Gastrocnemius medialis (tissue), 4 donors: ENCODE measurements at regions of chr18 and their contacts with region 1.

Region 1: DNA sequence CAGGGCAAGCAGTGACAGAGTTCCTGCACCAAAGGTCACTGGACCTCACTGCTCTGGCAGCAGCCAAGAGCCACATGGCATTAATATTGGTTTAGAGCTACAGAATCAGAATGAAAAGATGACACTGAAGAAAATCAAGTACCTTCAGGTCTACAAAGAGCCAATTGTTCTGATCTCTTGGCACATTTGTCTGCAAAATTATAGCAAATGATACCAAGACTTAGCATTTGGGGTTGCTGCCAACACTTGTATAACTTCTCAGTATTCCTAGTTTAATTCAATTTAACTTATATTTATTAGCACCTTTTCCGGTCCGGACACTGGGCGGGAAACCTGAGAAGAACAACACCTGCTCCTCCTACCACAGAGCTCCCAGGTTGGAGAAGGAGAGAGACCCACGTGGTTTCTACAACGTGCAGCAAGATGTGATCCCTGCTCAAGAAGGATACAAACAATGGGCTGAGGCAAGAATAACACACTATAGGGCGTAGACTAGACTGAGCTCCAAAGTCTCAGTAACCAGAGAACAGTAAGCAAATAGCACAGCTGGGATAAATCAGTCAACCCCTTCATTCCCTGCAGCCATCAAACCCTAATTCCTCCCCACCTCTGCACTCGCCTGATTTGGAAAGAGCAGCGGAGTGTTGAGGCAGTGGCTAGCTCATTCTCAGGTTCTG is 2.4 kb downstream of the LRRC30 start:
- DNase-seq: peak; percentile 78 to 80
- ATAC-seq: peak; percentile 55 to 59
- H3K4me3 ChIP-seq: peak overlapping the region; percentile 52 to 61 (median 54)
- H3K27ac ChIP-seq: peak overlapping the region; percentile 91 to 94 (median 92)
- H3K4me1 ChIP-seq: peaks cover 51 to 53% of the 10 kb centered on the region in 2 donors
- H3K27me3 ChIP-seq: no peaks in the 10 kb centered on the region
- CTCF ChIP-seq: no peak
- POLR2A ChIP-seq: peak in 1 of 2 donors; percentile 28

Region 2: DNA sequence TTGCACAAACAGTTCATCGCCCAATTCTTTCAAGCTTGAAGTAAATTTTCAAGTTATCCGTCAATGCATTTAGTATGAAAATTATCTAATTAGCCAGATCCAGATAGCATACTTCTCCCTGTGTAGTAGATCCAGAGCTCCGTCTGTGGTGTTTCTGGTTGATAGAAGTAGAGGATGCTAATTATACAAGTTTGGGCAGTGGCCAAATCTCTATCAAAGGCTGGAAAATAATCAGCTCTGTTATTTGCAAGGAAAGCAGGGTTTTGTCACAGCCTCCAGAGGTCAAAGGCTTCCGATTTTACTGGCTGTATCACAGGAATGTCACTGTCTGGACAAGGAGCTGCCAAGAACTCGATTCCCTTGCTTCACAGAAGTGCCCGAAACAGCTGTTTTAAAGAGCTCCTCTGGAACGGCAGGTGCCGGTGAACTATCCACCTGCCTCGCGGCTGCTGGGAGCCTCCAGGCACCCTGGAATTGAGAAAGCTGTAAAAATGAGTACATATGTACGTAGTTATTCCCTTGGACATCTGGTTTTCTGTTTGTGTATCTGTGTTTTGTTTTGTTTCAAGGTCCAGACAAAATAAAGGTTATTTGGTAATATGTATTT is 26.3 kb after region 1 on chr18:
- in situ Hi-C with region 1: no loop called
- intact Hi-C with region 1: loop called (anchors 2 kb)
- DNase-seq: no peak
- ATAC-seq: peak in 1 of 2 donors; percentile 20
- H3K4me3 ChIP-seq: peak overlapping the region; percentile 4 to 23 (median 13)
- H3K27ac ChIP-seq: peak overlapping the region; percentile 1 to 58 (median 28)
- H3K4me1 ChIP-seq: peaks cover 32 to 37% of the 10 kb centered on the region in 2 donors
- H3K27me3 ChIP-seq: no peaks in the 10 kb centered on the region
- CTCF ChIP-seq: no peak
- POLR2A ChIP-seq: no peak

Region 3: DNA sequence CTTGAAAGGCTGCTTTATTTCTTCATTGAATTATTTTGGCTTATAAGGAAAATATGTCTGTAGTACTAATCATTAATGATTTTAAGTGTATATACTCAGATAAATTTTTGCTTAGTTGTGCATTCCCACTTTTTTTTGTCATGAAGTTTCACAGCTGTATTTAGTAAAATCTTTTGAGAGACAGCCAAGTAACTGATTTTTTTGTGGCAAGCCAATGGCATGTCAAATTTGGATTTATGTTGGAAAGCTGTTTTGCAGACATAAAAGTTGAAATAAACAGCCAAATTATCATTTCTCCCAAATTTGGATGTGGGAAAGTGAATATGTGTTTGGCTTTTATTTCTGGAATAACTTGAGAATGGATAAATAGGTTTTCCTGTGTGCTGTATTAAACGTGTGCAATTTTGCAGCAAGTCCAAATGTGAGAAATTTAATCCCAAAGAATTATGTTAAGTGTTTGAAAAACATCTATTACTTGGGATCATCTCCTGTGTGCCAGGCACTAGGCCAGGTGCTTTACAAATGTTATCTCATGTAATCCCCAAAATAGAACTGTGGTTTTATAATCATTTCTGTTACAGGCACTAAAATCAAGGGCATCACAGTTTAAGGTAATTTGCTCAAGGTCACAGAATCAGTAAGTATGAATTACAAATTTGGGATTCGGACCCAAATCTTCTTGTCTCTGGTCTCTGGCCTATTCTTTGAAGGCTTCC is 494.2 kb after region 1 on chr18:
- in situ Hi-C with region 1: no loop called
- intact Hi-C with region 1: loop called (anchors 10 kb)
- DNase-seq: no peak
- ATAC-seq: no peak
- H3K4me3 ChIP-seq: no peak overlapping the region
- H3K27ac ChIP-seq: no peak overlapping the region
- H3K4me1 ChIP-seq: peaks cover 28 to 41% of the 10 kb centered on the region in 2 donors
- H3K27me3 ChIP-seq: no peaks in the 10 kb centered on the region
- CTCF ChIP-seq: no peak
- POLR2A ChIP-seq: no peak

Region 4: DNA sequence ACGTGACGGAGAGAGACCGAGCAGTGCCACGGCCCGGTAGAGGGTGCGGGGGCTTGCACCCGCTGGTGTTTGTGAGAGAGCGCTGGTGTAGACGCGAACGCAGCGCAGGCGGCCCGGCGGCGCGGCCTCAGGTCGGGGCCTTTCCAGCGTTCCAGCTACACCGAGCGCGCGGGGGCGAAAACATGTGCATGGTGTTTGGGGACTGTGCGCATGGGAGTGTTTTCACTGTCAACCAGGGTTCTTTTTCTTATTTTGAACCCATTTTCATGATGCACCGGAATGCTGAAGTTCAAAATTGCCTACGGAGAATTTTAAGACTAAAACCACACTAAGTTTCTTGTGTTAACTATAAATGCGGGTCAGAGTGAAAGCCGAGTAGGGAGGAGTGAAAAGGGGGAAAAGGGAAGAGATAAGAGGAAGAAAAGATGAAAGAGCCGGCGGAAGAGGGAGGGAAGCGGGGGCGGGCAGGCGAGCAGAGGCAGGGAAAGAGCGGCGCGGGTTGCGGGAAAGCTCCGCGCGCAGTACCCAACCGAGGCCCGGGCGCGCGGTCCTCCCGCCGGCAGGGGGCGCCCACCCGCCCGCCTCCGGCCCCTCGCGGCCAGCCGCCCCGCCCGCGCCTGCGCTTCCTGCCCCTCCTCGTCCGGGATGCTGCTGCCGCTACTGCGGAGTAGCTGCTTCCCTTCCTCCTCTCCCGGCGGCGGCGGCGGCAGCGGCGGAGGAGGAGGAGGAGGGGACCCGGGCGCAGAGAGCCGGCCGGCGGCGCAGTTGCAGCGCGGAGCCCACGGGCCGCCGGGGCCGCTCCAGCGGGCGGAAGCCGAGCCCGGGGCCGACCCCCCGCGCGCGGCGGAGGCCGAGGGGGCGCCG is 1375.8 kb after region 1 on chr18 and contains the start of gene RAB12:
- in situ Hi-C with region 1: loop called in 1 of 4 experiments (anchors 25 kb)
- intact Hi-C with region 1: no loop called
- DNase-seq: peak; percentile 86
- ATAC-seq: peak; percentile 71 to 78
- H3K4me3 ChIP-seq: peak within 1 kb of the TSS; percentile 84 to 98 (median 93)
- H3K27ac ChIP-seq: peak within 1 kb of the TSS; percentile 90 to 97 (median 94)
- H3K4me1 ChIP-seq: peaks cover 45 to 51% of the 10 kb centered on the region in 2 donors
- H3K27me3 ChIP-seq: no peaks in the 10 kb centered on the region
- CTCF ChIP-seq: peak; percentile 38 to 98 (median 97)
- POLR2A ChIP-seq: peak; percentile 84 to 89
- total RNA-seq, gene RAB12: 152 to 243 (median 213) TPM

Region 5: DNA sequence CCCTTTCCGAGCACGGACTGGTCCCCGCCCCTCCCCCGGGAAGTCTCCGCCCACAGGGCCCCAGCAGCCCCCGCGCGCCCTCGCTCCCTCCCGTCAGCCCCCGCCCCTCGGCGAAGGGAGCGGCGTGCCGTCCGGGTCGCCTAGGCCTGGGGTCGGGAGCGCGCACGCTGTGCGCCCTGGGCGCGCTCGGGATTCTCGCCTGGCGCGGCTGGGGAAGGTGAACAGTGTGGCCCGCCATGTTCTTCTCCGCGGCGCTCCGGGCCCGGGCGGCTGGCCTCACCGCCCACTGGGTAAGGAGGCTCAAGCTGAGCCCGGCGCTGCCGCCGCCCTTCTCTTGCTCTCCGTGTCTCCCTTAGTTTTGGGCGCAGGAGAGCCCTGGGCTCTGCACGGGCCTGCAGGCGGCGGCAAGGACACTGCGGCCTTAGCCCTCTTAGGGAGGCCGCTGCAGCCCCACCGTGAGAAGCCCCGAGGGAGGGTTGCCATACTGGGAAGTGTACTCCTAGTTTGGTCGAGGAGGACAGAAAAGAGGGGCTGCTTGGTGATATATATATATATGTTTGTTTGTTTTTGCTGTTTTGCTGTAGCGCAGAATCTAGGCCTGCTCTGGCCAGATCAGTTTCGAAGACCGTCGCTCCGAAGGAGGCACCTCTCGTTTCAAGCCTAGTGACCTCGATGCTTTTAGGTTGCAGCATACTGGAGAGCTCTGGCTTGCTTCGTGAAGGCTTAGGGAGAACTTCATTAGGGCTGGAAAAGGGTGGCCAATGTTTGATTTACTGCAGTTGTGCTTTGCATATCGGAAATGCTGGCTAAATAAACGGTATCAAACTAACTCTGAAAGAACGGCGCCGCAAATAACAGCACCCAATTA is 1869.5 kb after region 1 on chr18 and contains the start of gene NDUFV2:
- in situ Hi-C with region 1: loop called in 1 of 4 experiments (anchors 25 kb)
- intact Hi-C with region 1: no loop called
- DNase-seq: peak; percentile 95 to 96
- ATAC-seq: peak; percentile 89 to 93
- H3K4me3 ChIP-seq: peak within 1 kb of the TSS; percentile 73 to 89 (median 82)
- H3K27ac ChIP-seq: peak within 1 kb of the TSS; percentile 93 to 98 (median 96)
- H3K4me1 ChIP-seq: peaks cover 42 to 47% of the 10 kb centered on the region in 2 donors
- H3K27me3 ChIP-seq: no peaks in the 10 kb centered on the region
- CTCF ChIP-seq: no peak
- POLR2A ChIP-seq: peak; percentile 92
- total RNA-seq, gene NDUFV2: 251 to 386 (median 277) TPM